ENCODE measurements at regions of chr20 and their contacts with region 1.

Region 1: GRCh38 chr20:3786665-3787323 is at the start of gene CENPB:
- DNase-seq: peak; percentile 89
- H3K4me3 Mint-ChIP-seq: peak within 1 kb of the TSS; percentile 84
- H3K27ac Mint-ChIP-seq: peak within 1 kb of the TSS; percentile 82
- H3K4me1 Mint-ChIP-seq: peaks cover 41% of the 10 kb centered on the region
- H3K27me3 Mint-ChIP-seq: no peaks in the 10 kb centered on the region
- total RNA-seq, gene CENPB: 77.8 to 85.6 TPM

Region 2: GRCh38 chr20:3483784-3484183 is 303.0 kb before region 1 on chr20:
- CTCF ChIA-PET with region 1: no interaction called
- POLR2A ChIA-PET with region 1: no interaction called
- DNase-seq: no peak
- H3K4me3 Mint-ChIP-seq: no peak overlapping the region
- H3K27ac Mint-ChIP-seq: no peak overlapping the region
- H3K4me1 Mint-ChIP-seq: peaks cover 2% of the 10 kb centered on the region
- H3K27me3 Mint-ChIP-seq: no peaks in the 10 kb centered on the region

Region 3: GRCh38 chr20:3716195-3716834 is 70.5 kb before region 1 on chr20:
- CTCF ChIA-PET with region 1: no interaction called
- POLR2A ChIA-PET with region 1: no interaction called
- DNase-seq: peak; percentile 19
- H3K4me3 Mint-ChIP-seq: no peak overlapping the region
- H3K27ac Mint-ChIP-seq: no peak overlapping the region
- H3K4me1 Mint-ChIP-seq: peaks cover 10% of the 10 kb centered on the region
- H3K27me3 Mint-ChIP-seq: peaks cover 15% of the 10 kb centered on the region

Region 4: GRCh38 chr20:3811467-3812258 is 24.9 kb after region 1 on chr20:
- CTCF ChIA-PET with region 1: interaction called, 20 read pairs
- POLR2A ChIA-PET with region 1: interaction called, 3 read pairs
- DNase-seq: peak; percentile 91
- H3K4me3 Mint-ChIP-seq: peak overlapping the region; percentile 76
- H3K27ac Mint-ChIP-seq: peak overlapping the region; percentile 97
- H3K4me1 Mint-ChIP-seq: peaks cover 83% of the 10 kb centered on the region
- H3K27me3 Mint-ChIP-seq: no peaks in the 10 kb centered on the region

Region 5: GRCh38 chr20:3820048-3820900 is 33.5 kb after region 1 on chr20 and contains the start of gene AP5S1:
- CTCF ChIA-PET with region 1: interaction called, 77 read pairs
- POLR2A ChIA-PET with region 1: interaction called, 7 read pairs
- DNase-seq: peak; percentile 93
- H3K4me3 Mint-ChIP-seq: peak within 1 kb of the TSS; percentile 81
- H3K27ac Mint-ChIP-seq: peak within 1 kb of the TSS; percentile 93
- H3K4me1 Mint-ChIP-seq: peaks cover 55% of the 10 kb centered on the region
- H3K27me3 Mint-ChIP-seq: no peaks in the 10 kb centered on the region
- total RNA-seq, gene AP5S1: 16.6 to 18.2 TPM

Region 6: DNA sequence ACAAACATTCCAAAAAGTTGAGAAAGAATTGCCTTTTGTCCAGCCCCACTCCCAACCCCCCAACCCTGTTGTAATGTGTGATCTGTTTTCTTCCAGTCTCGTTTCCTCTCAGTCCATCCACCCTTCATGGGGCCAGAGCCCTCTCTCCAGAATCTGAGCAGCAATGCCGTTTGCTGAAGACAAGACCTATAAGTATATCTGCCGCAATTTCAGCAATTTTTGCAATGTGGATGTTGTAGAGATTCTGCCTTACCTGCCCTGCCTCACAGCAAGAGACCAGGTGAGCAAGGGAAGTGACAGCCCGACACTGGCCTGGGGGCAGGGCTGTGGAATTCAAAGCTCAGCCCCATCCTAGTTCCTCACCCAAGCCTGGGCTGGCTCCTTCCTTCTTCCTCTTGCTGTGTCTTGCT is 67.7 kb after region 1 on chr20:
- CTCF ChIA-PET with region 1: interaction called, 18 read pairs
- POLR2A ChIA-PET with region 1: no interaction called
- DNase-seq: no peak
- H3K4me3 Mint-ChIP-seq: no peak overlapping the region
- H3K27ac Mint-ChIP-seq: peak overlapping the region; percentile 25
- H3K4me1 Mint-ChIP-seq: peaks cover 12% of the 10 kb centered on the region
- H3K27me3 Mint-ChIP-seq: no peaks in the 10 kb centered on the region

Region 7: DNA sequence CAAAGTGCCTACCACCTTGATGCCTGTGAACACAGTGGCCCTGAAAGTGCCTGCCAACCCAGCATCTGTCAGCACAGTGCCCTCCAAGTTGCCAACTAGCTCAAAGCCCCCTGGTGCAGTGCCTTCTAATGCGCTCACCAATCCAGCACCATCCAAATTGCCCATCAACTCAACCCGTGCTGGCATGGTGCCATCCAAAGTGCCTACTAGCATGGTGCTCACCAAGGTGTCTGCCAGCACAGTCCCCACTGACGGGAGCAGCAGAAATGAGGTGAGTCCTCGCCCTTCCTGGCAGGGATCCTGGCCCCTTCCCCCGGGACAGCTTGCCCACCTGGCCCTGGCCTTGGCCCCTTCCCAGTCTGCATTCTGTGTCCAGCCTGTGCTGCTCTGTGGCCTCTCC is 77.7 kb after region 1 on chr20:
- CTCF ChIA-PET with region 1: no interaction called
- POLR2A ChIA-PET with region 1: no interaction called
- DNase-seq: no peak
- H3K4me3 Mint-ChIP-seq: no peak overlapping the region
- H3K27ac Mint-ChIP-seq: no peak overlapping the region
- H3K4me1 Mint-ChIP-seq: no peaks in the 10 kb centered on the region
- H3K27me3 Mint-ChIP-seq: no peaks in the 10 kb centered on the region

Measured in activated CD4-positive, alpha-beta T cell treated with anti-CD3 and anti-CD28 coated beads, Interleukin-2, amount 10 ng/mL, durations not matched to agents 7 days and 5 days (primary cell).